ENCODE measurements at regions of chr11 and their contacts with region 1.

Region 1: DNA sequence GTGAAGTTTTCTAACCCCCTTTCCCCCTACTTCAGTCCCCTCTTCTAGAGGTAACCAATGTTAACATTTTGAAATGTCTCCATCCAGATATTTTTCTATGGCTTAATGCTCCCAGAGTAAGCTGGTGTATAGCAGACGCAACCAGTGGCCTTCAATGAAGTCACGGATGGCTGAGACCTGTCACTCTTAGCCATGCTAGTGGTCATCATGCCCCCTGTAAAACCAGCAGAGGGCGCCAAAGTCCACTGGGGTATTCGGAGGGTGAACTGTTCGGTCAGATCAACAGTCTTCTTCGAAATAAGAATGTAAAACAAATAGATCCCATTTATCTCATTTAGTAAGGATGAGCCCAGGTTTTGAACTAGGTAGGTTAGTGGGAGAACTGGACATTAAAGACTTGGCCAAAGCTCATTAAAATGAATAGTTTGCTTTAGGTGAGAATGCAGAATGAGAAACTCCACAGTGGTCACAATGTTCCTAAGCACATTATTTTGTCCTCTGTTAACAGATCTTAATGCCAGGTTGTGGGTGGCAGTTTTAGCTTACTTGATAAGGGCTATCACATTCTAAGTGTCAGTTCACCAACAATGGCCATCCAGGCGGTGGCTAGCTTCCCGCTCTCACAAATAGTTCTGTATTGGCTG is 8.6 kb upstream of the MMP8 start:
- DNase-seq: peak; percentile 56
- H3K4me3 ChIP-seq: no peak overlapping the region
- H3K27ac ChIP-seq: no peak overlapping the region
- H3K4me1 ChIP-seq: no peaks in the 10 kb centered on the region
- CTCF ChIP-seq: peak; percentile 96

Region 2: GRCh38 chr11:102940714-102941588 is 207.6 kb after region 1 on chr11:
- CTCF ChIA-PET with region 1: no interaction called
- POLR2A ChIA-PET with region 1: no interaction called
- intact Hi-C with region 1: loop called (anchors 2 kb)
- DNase-seq: peak; percentile 65
- H3K4me3 ChIP-seq: no peak overlapping the region
- H3K27ac ChIP-seq: no peak overlapping the region
- H3K4me1 ChIP-seq: no peaks in the 10 kb centered on the region
- CTCF ChIP-seq: peak; percentile 93

Measured in OCI-LY7 (cell line).